H1 (cell line): ENCODE measurements at regions of chr9 and their contacts with region 1.

Region 1: GRCh38 chr9:15104826-15105420 is 194.7 kb upstream of the FREM1 start:
- DNase-seq: peak in 1 of 2 experiments; percentile 53
- H3K4me3 ChIP-seq: no peak overlapping the region
- H3K27ac ChIP-seq: no peak overlapping the region
- H3K4me1 ChIP-seq: no peaks in the 10 kb centered on the region
- H3K27me3 ChIP-seq: no peaks in the 10 kb centered on the region
- CTCF ChIP-seq: peak; percentile 3 to 84 (median 80)
- EP300 ChIP-seq: no peak
- POLR2A ChIP-seq: no peak
- RAD21 ChIP-seq: peak; percentile 74 to 86

Region 2: DNA sequence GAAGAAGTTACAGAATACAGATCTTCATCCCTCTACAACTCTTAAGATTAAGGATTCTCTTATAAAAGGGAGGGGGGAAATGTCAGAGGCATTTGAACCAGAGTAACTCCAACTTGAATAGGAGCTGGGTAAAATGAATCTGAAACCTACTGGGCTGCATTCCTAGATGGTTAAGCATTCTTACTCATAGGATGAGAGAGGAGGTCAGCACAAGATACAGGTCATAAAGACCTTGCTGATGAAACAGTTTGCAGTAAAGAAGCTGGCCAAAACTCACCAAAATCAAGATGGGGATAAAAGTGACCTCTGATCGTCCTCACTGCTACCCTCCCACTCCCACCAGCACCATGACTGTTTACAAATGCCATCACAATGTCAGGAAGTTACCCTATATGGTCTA is 209.1 kb before region 1 on chr9:
- CTCF ChIA-PET with region 1: no interaction called
- POLR2A ChIA-PET with region 1: no interaction called
- DNase-seq: no peak
- H3K4me3 ChIP-seq: no peak overlapping the region
- H3K27ac ChIP-seq: no peak overlapping the region
- H3K4me1 ChIP-seq: peaks cover 0 to 5% (median 0%) of the 10 kb centered on the region in 4 experiments; a peak in 2 of 7 replicates
- H3K27me3 ChIP-seq: no peaks in the 10 kb centered on the region
- CTCF ChIP-seq: no peak
- EP300 ChIP-seq: no peak
- POLR2A ChIP-seq: no peak
- RAD21 ChIP-seq: no peak

Region 3: GRCh38 chr9:15081021-15081753 is 23.7 kb before region 1 on chr9:
- CTCF ChIA-PET with region 1: interaction called, 12 read pairs
- POLR2A ChIA-PET with region 1: no interaction called
- DNase-seq: no peak
- H3K4me3 ChIP-seq: no peak overlapping the region
- H3K27ac ChIP-seq: no peak overlapping the region
- H3K4me1 ChIP-seq: no peaks in the 10 kb centered on the region
- H3K27me3 ChIP-seq: no peaks in the 10 kb centered on the region
- CTCF ChIP-seq: no peak
- EP300 ChIP-seq: no peak
- POLR2A ChIP-seq: no peak
- RAD21 ChIP-seq: no peak

Region 4: DNA sequence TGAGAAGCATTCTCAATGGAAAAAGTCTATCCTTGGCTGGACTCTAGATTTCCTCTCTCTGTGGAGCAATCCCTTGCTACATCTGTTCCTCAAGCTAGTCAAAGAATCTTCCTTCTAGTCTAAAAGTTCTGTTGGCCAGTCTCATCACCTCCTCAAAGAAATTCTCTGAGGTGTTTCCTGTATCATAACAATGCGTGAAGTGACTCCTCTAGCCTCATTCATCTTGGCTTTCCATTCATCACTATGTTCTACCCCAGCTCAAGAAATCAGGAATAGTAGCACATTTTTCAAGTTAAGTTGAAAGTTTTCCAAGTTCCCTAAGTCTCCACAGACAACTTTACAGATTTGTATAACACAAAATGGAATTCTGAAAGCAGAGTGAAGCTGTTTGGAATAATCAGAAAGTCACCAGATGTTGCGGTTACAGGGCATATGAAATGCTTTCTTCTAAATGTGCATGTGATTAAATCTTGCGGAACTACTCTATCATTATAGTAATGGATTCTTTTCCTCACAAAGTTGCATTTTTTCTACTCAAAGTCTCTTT is 18.1 kb before region 1 on chr9:
- CTCF ChIA-PET with region 1: interaction called, 21 read pairs
- POLR2A ChIA-PET with region 1: no interaction called
- DNase-seq: no peak
- H3K4me3 ChIP-seq: no peak overlapping the region
- H3K27ac ChIP-seq: no peak overlapping the region
- H3K4me1 ChIP-seq: no peaks in the 10 kb centered on the region
- H3K27me3 ChIP-seq: no peaks in the 10 kb centered on the region
- CTCF ChIP-seq: no peak
- EP300 ChIP-seq: no peak
- POLR2A ChIP-seq: no peak
- RAD21 ChIP-seq: no peak

Region 5: DNA sequence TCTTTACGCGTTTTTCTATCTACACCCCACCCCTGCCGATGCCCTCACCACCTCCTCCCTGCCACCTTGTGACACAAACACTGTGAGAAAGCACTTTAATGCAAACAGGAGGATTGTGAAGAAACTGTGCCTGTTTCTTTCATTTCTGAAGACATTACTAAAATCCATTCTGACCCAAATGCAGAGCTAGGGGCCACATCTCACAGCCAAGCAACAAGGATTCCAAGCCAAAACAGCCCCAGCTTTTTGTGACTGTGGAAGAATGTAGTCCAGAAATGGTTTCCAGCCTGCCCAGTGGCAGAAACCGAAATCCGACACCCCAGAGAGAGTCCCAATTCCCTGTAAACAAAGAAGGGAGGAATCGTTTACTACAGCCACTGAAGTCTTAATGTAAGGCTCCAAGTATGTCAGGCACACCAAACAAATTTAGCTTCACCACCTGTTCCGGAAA is 11.2 kb after region 1 on chr9:
- CTCF ChIA-PET with region 1: interaction called, 45 read pairs
- POLR2A ChIA-PET with region 1: no interaction called
- DNase-seq: no peak
- H3K4me3 ChIP-seq: no peak overlapping the region
- H3K27ac ChIP-seq: no peak overlapping the region
- H3K4me1 ChIP-seq: peaks cover 2 to 10% (median 3%) of the 10 kb centered on the region in 4 experiments; a peak in 4 of 7 replicates
- H3K27me3 ChIP-seq: no peaks in the 10 kb centered on the region
- CTCF ChIP-seq: no peak
- EP300 ChIP-seq: no peak
- POLR2A ChIP-seq: no peak
- RAD21 ChIP-seq: no peak

Region 6: GRCh38 chr9:15135164-15135792 is 30.4 kb after region 1 on chr9:
- CTCF ChIA-PET with region 1: interaction called, 93 read pairs
- POLR2A ChIA-PET with region 1: no interaction called
- DNase-seq: peak in 1 of 2 experiments; percentile 73
- H3K4me3 ChIP-seq: no peak overlapping the region
- H3K27ac ChIP-seq: no peak overlapping the region
- H3K4me1 ChIP-seq: peaks cover 2 to 21% (median 18%) of the 10 kb centered on the region in 4 experiments; a peak in 5 of 7 replicates
- H3K27me3 ChIP-seq: no peaks in the 10 kb centered on the region
- CTCF ChIP-seq: peak; percentile 4 to 93 (median 91)
- EP300 ChIP-seq: no peak
- POLR2A ChIP-seq: no peak
- RAD21 ChIP-seq: peak; percentile 93 to 95

Region 7: GRCh38 chr9:15404171-15404570 is 299.2 kb after region 1 on chr9:
- CTCF ChIA-PET with region 1: no interaction called
- POLR2A ChIA-PET with region 1: no interaction called
- DNase-seq: no peak
- H3K4me3 ChIP-seq: no peak overlapping the region
- H3K27ac ChIP-seq: no peak overlapping the region
- H3K4me1 ChIP-seq: peaks cover 0 to 3% (median 0%) of the 10 kb centered on the region in 4 experiments; a peak in 1 of 7 replicates
- H3K27me3 ChIP-seq: no peaks in the 10 kb centered on the region
- CTCF ChIP-seq: no peak
- EP300 ChIP-seq: no peak
- POLR2A ChIP-seq: no peak
- RAD21 ChIP-seq: no peak